Activated T-helper 1 cell treated with anti-CD3 and anti-CD28 coated beads, Interleukin-12 subunit alpha, Interleukin-12 subunit beta, Interleukin-2, Interleukin-4 antibody, amounts not matched to agents 30 ng/mL and 10 ng/mL and 1 ng/mL, durations not matched to agents 14 hours and 24 hours and 36 hours (primary cell): ENCODE measurements at regions of chr13 and their contacts with region 1.

Region 1: DNA sequence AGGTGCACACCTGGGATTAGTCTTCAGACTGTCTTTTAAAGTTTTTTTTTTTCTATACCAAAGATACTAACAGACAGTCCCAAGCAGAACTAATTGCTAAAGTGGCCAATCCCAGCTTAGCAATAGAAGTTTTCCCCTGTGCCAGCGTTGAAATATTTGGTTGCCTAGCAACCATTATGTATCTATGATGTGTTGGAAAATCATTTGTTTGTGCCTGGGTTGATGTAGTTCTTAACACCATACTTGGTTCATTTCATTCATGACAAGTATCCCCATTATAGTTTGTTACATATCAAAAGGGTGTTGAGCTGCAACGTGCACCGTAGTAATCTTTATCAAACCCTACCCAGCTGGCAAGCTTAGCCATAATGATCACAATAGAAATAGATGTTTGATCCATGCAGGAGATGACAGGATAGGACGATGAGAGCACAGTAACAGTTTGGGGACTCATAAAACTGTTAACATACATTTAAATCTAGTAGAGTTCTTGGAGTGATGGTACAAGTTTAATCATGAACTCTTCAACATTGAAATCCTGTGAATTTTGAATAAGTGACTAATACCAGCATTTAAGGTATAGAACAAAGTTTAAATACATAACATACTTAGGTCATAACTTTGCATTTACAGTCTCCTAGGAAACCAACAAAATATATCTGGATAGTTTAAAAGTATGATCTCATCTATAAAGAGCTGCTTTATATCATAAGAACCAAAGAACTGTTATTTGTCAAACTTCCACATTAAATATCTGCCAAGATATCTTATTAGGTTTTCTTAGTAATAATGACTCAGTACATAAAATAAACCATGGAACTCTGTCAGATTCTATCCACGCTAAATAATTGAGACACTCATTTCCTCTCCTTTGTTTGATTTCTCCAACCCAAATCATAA is 73.4 kb downstream of the MBNL2 start:
- DNase-seq: no peak
- H3K4me3 Mint-ChIP-seq: no peak overlapping the region
- H3K27ac Mint-ChIP-seq: no peak overlapping the region
- H3K4me1 Mint-ChIP-seq: peaks cover 7% of the 10 kb centered on the region
- H3K27me3 Mint-ChIP-seq: peaks cover 1% of the 10 kb centered on the region

Region 2: GRCh38 chr13:97221989-97222700 is 73.4 kb before region 1 on chr13 and contains the start of gene MBNL2:
- intact Hi-C with region 1: loop called (anchors 1 kb)
- DNase-seq: peak; percentile 80
- H3K4me3 Mint-ChIP-seq: peak within 1 kb of the TSS; percentile 87
- H3K27ac Mint-ChIP-seq: peak within 1 kb of the TSS; percentile 82
- H3K4me1 Mint-ChIP-seq: peaks cover 49% of the 10 kb centered on the region
- H3K27me3 Mint-ChIP-seq: no peaks in the 10 kb centered on the region
- total RNA-seq, gene MBNL2: 20.7 and 24.2 TPM in 2 replicates

Region 3: GRCh38 chr13:97235549-97236231 is 59.8 kb before region 1 on chr13:
- intact Hi-C with region 1: no loop called
- DNase-seq: no peak
- H3K4me3 Mint-ChIP-seq: no peak overlapping the region
- H3K27ac Mint-ChIP-seq: no peak overlapping the region
- H3K4me1 Mint-ChIP-seq: peaks cover 21% of the 10 kb centered on the region
- H3K27me3 Mint-ChIP-seq: no peaks in the 10 kb centered on the region